Activated CD4-positive, alpha-beta memory T cell treated with anti-CD3 and anti-CD28 coated beads, Interleukin-2, amount 10 ng/mL, durations not matched to agents 7 days and 5 days (primary cell): ENCODE measurements at regions of chr9 and their contacts with region 1.

Region 1: DNA sequence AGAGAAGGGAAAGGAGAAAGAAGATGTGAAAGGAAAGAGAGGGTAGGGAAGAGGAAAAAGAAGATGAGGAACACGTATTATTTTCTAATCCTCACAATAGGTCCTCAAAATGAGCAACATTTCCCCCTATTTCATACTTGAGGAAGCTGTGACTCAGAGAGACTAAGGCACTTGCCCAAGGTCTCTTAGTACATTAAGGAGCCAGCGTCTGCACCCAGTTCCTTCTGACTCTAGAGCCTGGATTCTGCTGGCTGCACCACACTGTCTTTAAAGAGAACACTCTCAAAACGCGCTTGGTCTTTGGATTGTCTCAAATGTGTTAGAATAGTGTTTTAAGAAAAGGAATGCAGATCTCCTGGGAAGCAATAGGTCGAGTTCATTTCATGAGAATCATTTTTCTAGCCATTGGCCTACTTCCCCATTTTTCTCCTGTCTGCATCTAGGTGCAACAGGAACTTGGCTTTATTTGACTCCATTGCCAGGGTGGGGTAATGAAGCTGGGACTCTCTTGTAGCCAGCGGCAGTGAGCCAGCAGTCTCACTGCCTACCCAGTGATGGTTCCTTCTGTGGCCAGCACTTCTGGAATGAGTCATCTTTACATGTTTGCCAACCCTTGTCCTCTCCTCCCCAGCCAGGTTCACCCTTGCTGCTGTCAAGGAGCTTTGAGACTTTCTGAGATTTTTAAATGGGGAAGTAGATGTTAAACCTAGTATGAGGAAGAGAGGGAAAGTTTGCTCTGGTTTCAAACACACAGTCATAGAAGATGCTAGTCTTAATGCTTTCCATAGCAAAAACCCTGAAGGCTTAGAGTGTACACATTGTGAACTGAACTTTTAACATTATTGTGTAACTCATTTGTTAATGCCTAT is 82.7 kb downstream of the DOCK8 start:
- DNase-seq: no peak
- H3K4me3 Mint-ChIP-seq: no peak overlapping the region
- H3K27ac Mint-ChIP-seq: peak overlapping the region; percentile 71
- H3K4me1 Mint-ChIP-seq: peaks cover 59% of the 10 kb centered on the region
- H3K27me3 Mint-ChIP-seq: no peaks in the 10 kb centered on the region

Region 2: DNA sequence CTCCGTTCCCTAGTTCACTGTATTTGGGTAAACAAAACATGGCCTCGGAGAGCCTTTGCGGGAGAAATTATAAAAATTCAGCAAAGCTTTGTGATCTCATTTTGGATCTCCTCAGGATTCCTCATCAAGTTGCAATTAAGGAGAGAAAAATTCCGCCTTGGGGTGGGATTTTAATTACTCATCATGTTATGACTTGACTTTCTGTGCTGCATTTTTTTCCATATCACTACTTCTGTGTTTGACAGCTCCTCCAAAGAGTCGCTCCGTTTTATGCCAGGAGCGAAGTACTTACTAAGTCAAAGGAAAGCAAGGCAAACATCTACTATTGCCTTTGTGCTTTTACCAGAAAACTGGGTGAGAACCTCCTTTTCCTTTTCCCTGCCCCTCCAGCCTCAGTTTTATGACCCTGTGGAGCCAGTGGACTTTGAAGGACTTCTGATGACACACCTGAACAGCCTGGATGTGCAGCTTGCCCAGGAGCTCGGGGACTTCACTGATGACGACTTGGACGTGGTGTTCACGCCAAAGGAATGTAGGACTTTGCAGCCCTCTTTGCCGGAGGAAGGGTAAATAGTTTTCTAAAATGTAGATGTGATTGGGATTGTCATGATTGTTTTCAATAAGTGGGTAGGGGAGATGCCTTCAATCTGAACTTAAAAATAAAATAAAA is 11.1 kb before region 1 on chr9:
- CTCF ChIA-PET with region 1: no interaction called
- POLR2A ChIA-PET with region 1: interaction called, 13 read pairs
- DNase-seq: no peak
- H3K4me3 Mint-ChIP-seq: no peak overlapping the region
- H3K27ac Mint-ChIP-seq: no peak overlapping the region
- H3K4me1 Mint-ChIP-seq: peaks cover 66% of the 10 kb centered on the region
- H3K27me3 Mint-ChIP-seq: no peaks in the 10 kb centered on the region